ENCODE measurements at regions of chr1 and their contacts with region 1.

Region 1: GRCh38 chr1:19861034-19861433 is 21.2 kb upstream of the OTUD3 start:
- DNase-seq: peak; percentile 48 to 71
- H3K4me3 ChIP-seq: no peak overlapping the region
- H3K4me3 Mint-ChIP-seq: no peak overlapping the region
- H3K27ac Mint-ChIP-seq: peak overlapping the region; percentile 25
- H3K4me1 ChIP-seq: peaks cover 36% of the 10 kb centered on the region
- H3K4me1 Mint-ChIP-seq: peaks cover 12% of the 10 kb centered on the region
- H3K27me3 ChIP-seq: no peaks in the 10 kb centered on the region
- H3K27me3 Mint-ChIP-seq: no peaks in the 10 kb centered on the region
- CTCF ChIP-seq: no peak

Region 2: DNA sequence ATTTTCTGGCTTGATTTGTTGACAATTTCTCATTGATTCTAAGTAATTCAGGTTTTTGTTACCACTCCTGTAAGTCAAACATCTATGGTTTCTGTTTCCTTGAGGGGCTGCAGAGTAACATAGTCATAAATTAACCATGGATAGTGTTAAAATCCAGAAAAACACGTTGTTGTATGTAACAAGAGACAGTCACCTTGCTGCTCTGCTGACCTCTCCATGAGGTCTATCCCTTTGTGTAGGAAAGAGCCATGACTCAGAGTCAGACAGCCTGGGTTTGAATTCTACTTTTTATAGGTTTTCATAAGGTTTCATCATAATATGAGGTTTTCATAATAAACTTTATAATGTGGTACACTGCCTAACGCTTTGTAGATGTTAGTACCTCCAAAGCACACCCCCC is 244.5 kb before region 1 on chr1:
- CTCF ChIA-PET with region 1: no interaction called
- POLR2A ChIA-PET with region 1: no interaction called
- intact Hi-C with region 1: no loop called
- DNase-seq: no peak
- H3K4me3 ChIP-seq: no peak overlapping the region
- H3K4me3 Mint-ChIP-seq: no peak overlapping the region
- H3K27ac Mint-ChIP-seq: no peak overlapping the region
- H3K4me1 ChIP-seq: peaks cover 21% of the 10 kb centered on the region
- H3K4me1 Mint-ChIP-seq: no peaks in the 10 kb centered on the region
- H3K27me3 ChIP-seq: no peaks in the 10 kb centered on the region
- H3K27me3 Mint-ChIP-seq: no peaks in the 10 kb centered on the region
- CTCF ChIP-seq: no peak

Region 3: DNA sequence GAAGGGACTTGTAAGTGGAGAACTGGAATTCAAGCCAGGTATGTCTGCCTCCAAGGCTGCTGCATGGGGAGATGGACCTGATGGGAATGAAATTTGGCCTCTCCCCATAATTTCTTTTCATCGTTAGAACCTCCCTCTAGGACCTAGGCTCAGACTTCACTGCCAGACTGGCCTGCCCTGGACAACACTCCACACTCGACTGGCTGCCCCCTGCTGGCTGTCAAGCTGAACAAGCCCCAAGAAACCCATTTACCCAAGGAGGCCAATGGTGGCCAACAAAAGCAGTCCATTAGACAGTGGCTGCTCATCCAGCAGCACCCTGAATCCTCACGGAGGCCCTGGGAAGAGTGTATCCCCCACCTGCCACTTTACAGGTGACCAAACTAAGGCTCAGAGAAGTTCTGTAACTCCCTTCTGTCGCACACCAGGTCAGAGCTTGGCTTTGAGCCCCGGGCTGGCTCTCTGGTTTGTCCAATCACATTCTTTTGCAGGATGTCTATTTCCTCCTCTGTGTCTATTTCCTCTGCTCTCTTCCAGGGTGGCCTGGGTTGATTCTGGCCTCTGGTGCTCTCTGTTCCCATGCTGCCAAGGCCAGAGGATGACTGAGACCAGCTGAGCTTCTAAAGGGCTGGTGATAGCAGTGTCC is 49.7 kb before region 1 on chr1:
- CTCF ChIA-PET with region 1: no interaction called
- POLR2A ChIA-PET with region 1: interaction called, 10 read pairs
- intact Hi-C with region 1: loop called (anchors 10 kb)
- DNase-seq: peak in 1 of 2 experiments; percentile 29
- H3K4me3 ChIP-seq: no peak overlapping the region
- H3K4me3 Mint-ChIP-seq: no peak overlapping the region
- H3K27ac Mint-ChIP-seq: no peak overlapping the region
- H3K4me1 ChIP-seq: peaks cover 17% of the 10 kb centered on the region
- H3K4me1 Mint-ChIP-seq: peaks cover 8% of the 10 kb centered on the region
- H3K27me3 ChIP-seq: no peaks in the 10 kb centered on the region
- H3K27me3 Mint-ChIP-seq: no peaks in the 10 kb centered on the region
- CTCF ChIP-seq: peak; percentile 24 to 35

Region 4: GRCh38 chr1:19825298-19825697 is 35.7 kb before region 1 on chr1:
- CTCF ChIA-PET with region 1: no interaction called
- POLR2A ChIA-PET with region 1: no interaction called
- intact Hi-C with region 1: no loop called
- DNase-seq: no peak
- H3K4me3 ChIP-seq: no peak overlapping the region
- H3K4me3 Mint-ChIP-seq: no peak overlapping the region
- H3K27ac Mint-ChIP-seq: no peak overlapping the region
- H3K4me1 ChIP-seq: no peaks in the 10 kb centered on the region
- H3K4me1 Mint-ChIP-seq: peaks cover 11% of the 10 kb centered on the region
- H3K27me3 ChIP-seq: no peaks in the 10 kb centered on the region
- H3K27me3 Mint-ChIP-seq: no peaks in the 10 kb centered on the region
- CTCF ChIP-seq: no peak

Region 5: DNA sequence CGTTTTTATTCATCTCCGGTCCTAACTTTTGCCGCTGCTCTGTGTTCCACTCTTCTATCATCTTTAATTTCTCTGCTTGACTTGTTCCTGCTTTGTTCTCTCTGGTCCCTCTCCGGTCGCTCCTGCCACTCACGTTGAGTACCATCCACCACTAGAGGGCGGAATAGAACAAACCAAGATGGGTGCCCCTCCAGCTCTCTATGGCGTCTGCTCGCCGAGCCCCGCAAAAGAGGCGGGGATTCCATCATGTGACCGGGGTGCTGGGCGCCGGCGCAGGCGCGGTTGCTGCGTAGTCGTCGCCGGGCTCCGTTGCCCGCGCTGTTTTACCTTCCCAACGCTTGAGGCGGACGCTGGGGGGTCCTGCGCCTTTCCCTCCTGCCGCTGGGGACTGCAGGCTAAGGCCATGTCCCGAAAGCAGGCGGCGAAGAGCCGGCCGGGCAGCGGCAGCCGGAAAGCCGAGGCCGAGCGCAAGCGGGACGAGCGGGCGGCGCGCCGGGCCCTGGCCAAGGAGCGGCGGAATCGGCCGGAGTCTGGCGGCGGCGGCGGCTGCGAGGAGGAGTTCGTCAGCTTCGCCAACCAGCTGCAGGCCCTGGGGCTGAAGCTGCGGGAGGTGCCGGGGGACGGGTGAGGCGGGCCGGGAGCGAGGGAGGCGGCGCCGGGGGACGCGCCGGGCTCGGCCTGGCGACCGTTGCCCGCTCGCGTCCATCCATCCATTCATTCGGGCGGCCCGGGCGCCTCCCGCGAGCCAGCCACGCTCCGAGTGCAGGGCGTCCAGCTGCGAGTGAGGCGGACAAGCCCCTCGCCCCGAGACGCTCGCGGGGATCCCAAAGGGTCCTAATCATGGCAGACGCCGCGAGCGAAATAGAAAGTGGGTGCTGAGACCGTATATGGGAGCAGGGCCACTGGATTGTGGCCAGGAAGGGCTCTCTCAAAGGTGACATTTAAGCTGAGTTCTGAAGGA is 21.4 kb after region 1 on chr1 and contains the start of gene OTUD3:
- CTCF ChIA-PET with region 1: interaction called, 10 read pairs
- POLR2A ChIA-PET with region 1: no interaction called
- intact Hi-C with region 1: no loop called
- DNase-seq: peak; percentile 94
- H3K4me3 ChIP-seq: peak within 1 kb of the TSS; percentile 81
- H3K4me3 Mint-ChIP-seq: peak within 1 kb of the TSS; percentile 70
- H3K27ac Mint-ChIP-seq: peak within 1 kb of the TSS; percentile 9
- H3K4me1 ChIP-seq: 0 out of 2 replicates have a peak, but pooled peaks cover 5% of the 10 kb centered on the region
- H3K4me1 Mint-ChIP-seq: peaks cover 12% of the 10 kb centered on the region
- H3K27me3 ChIP-seq: no peaks in the 10 kb centered on the region
- H3K27me3 Mint-ChIP-seq: no peaks in the 10 kb centered on the region
- CTCF ChIP-seq: peak; percentile 73 to 80
- total RNA-seq, gene OTUD3: 15.1 and 15.6 TPM in 2 replicates